AG04449 (cell line): ENCODE measurements at regions of chrX and their contacts with region 1.

Region 1: GRCh38 chrX:119266364-119266995 is 30.4 kb downstream of the PGRMC1 start:
- DNase-seq: no peak
- H3K4me3 ChIP-seq: no peak overlapping the region
- CTCF ChIP-seq: peak; percentile 57

Region 2: GRCh38 chrX:119251386-119251785 is 15.1 kb before region 1 on chrX:
- CTCF ChIA-PET with region 1: interaction called, 10 read pairs
- POLR2A ChIA-PET with region 1: no interaction called
- DNase-seq: no peak
- H3K4me3 ChIP-seq: no peak overlapping the region
- CTCF ChIP-seq: no peak